Body of pancreas (tissue), 4 donors: ENCODE measurements at regions of chr12 and their contacts with region 1.

Region 1: GRCh38 chr12:109775172-109775881 is 57.9 kb downstream of the TRPV4 start:
- DNase-seq: peak; percentile 74 to 83 (median 79)
- ATAC-seq: peak; percentile 76
- H3K4me3 ChIP-seq: no peak overlapping the region
- H3K27ac ChIP-seq: no peak overlapping the region
- H3K4me1 ChIP-seq: peaks cover 15% of the 10 kb centered on the region
- H3K27me3 ChIP-seq: no peaks in the 10 kb centered on the region
- CTCF ChIP-seq: peak; percentile 80 to 93 (median 86)
- POLR2A ChIP-seq: no peak

Region 2: GRCh38 chr12:109432841-109433304 is 342.5 kb before region 1 on chr12:
- intact Hi-C with region 1: loop called (anchors 10 kb)
- DNase-seq: peak; percentile 84 to 90 (median 85)
- ATAC-seq: peak; percentile 79
- H3K4me3 ChIP-seq: no peak overlapping the region
- H3K27ac ChIP-seq: no peak overlapping the region
- H3K4me1 ChIP-seq: peaks cover 7% of the 10 kb centered on the region
- H3K27me3 ChIP-seq: no peaks in the 10 kb centered on the region
- CTCF ChIP-seq: peak; percentile 63 to 87 (median 70)
- POLR2A ChIP-seq: no peak

Region 3: GRCh38 chr12:109597795-109598427 is 177.4 kb before region 1 on chr12:
- intact Hi-C with region 1: loop called (anchors 5 kb)
- DNase-seq: peak; percentile 86 to 90 (median 90)
- ATAC-seq: peak; percentile 88
- H3K4me3 ChIP-seq: no peak overlapping the region
- H3K27ac ChIP-seq: no peak overlapping the region
- H3K4me1 ChIP-seq: peaks cover 22% of the 10 kb centered on the region
- H3K27me3 ChIP-seq: no peaks in the 10 kb centered on the region
- CTCF ChIP-seq: peak; percentile 88 to 96 (median 94)
- POLR2A ChIP-seq: peak in 1 of 3 donors; percentile 17